CD4-positive, alpha-beta memory T cell (primary cell): ENCODE measurements at regions of chr2 and their contacts with region 1.

Region 1: GRCh38 chr2:12716282-12717190 is at the start of gene TRIB2:
- DNase-seq: peak; percentile 87 to 92 (median 89)
- H3K4me3 ChIP-seq: peak within 1 kb of the TSS; percentile 78 to 96
- H3K4me3 Mint-ChIP-seq: peak within 1 kb of the TSS; percentile 98 to 100 (median 99)
- H3K27ac ChIP-seq: peak within 1 kb of the TSS; percentile 84
- H3K27ac Mint-ChIP-seq: peak within 1 kb of the TSS; percentile 93 to 99 (median 96)
- H3K4me1 ChIP-seq: peaks cover 39% of the 10 kb centered on the region
- H3K4me1 Mint-ChIP-seq: peaks cover 28 to 83% (median 43%) of the 10 kb centered on the region in 4 donors
- H3K27me3 ChIP-seq: no peaks in the 10 kb centered on the region
- H3K27me3 Mint-ChIP-seq: peaks cover 0 to 2% of the 10 kb centered on the region in 2 donors
- total RNA-seq, gene TRIB2: 123 to 126 TPM

Region 2: DNA sequence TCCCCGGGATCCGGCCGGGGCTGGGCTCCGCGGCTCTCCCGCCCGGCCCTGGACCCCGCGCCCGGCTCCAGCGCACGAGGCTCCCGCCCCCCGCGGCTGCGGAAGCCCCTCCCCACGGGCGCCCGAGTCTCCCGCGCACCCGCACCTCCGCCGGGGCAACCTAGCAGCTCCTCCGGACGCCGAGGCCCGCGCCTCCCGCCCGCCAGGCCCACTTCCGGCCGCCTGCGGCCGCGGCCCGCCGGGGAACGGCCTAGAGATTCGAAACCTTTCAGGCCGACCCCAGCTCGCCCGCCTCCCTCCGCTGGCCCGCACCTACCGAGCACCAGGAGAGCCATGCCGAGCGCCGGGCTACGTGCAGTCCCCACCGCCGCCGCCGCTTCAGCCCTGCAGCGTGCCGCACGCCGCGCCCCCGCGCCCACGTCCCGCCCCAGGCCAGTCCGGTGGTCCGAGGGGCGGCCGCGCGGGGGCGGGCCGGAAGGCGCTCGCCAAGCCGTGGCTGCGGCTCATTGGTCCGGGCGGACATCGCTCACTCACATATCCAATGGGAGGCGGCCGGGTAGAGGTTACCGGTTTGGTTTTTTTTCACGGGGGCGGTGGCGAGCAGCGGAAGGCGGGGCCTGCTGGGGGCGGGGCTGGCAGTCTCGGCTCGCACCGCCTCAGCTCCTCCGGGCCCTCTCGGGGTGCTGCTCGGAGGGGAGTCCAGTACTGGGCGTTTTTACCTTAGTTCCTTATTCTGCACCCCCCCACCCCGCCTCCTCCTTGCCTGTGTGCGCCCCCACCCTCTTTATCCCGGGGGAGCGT is 1904.0 kb before region 1 on chr2 and contains the start of gene PDIA6:
- CTCF ChIA-PET with region 1: no interaction called
- POLR2A ChIA-PET with region 1: no interaction called
- intact Hi-C with region 1: loop called (anchors 10 kb)
- DNase-seq: peak; percentile 90 to 95 (median 92)
- H3K4me3 ChIP-seq: peak within 1 kb of the TSS; percentile 72 to 92
- H3K4me3 Mint-ChIP-seq: peak within 1 kb of the TSS; percentile 84 to 95 (median 94)
- H3K27ac ChIP-seq: peak within 1 kb of the TSS; percentile 76
- H3K27ac Mint-ChIP-seq: peak within 1 kb of the TSS; percentile 76 to 95 (median 94)
- H3K4me1 ChIP-seq: peaks cover 47% of the 10 kb centered on the region
- H3K4me1 Mint-ChIP-seq: peaks cover 30 to 43% (median 34%) of the 10 kb centered on the region in 4 donors
- H3K27me3 ChIP-seq: peaks cover under 1% of the 10 kb centered on the region
- H3K27me3 Mint-ChIP-seq: no peaks in the 10 kb centered on the region
- total RNA-seq, gene PDIA6: 75.9 to 84.7 TPM

Region 3: DNA sequence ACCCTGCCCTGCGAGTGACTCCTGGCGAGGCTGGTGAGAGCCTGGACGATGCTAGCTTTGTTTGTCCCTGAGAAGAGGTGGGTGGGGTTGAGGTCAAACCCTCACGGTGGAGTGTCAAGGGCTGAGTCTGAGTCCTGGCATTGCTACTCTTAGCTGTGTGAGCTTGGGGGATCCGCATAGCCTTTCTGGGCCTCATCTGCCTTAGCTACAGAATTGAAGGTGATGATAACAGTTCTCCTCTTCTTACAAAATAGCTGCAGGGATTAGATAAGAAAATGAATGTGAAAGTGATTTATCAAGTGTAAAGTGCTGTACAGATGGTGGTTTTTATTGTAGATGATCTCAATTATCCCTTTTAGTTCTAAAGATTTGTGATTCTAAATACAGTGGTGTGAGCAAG is 825.5 kb before region 1 on chr2:
- CTCF ChIA-PET with region 1: no interaction called
- POLR2A ChIA-PET with region 1: no interaction called
- intact Hi-C with region 1: no loop called
- DNase-seq: no peak
- H3K4me3 ChIP-seq: no peak overlapping the region
- H3K4me3 Mint-ChIP-seq: no peak overlapping the region
- H3K27ac ChIP-seq: no peak overlapping the region
- H3K27ac Mint-ChIP-seq: no peak overlapping the region
- H3K4me1 ChIP-seq: no peaks in the 10 kb centered on the region
- H3K4me1 Mint-ChIP-seq: peaks cover 0 to 1% (median 0%) of the 10 kb centered on the region in 4 donors
- H3K27me3 ChIP-seq: no peaks in the 10 kb centered on the region
- H3K27me3 Mint-ChIP-seq: peaks cover 4 to 5% of the 10 kb centered on the region in 2 donors

Region 4: DNA sequence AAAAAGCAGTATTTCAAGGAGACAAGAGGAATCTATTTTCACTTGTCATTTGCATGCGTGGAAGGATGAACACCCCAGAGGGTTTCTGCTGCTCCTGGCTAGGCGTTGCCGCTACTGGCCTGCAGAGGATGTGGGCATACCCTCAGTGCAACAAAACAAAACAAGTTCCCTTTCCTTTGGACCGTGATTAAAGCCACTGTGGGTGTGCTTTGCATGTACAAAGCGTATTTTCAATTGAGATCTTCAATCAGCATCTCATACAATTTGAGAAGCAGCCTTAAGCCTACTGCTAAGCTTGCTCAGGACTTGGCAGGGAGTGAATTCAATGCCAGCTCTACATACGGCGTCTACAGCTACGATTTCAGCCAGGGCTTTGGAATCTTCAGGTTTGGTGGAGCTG is 671.7 kb before region 1 on chr2:
- CTCF ChIA-PET with region 1: interaction called, 12 read pairs
- POLR2A ChIA-PET with region 1: interaction called, 10 read pairs
- intact Hi-C with region 1: loop called (anchors 5 kb)
- DNase-seq: peak in 4 of 5 donors; percentile 61 to 75 (median 66)
- H3K4me3 ChIP-seq: no peak overlapping the region
- H3K4me3 Mint-ChIP-seq: peak overlapping the region in 7 of 8 donors; percentile 12 to 79 (median 59)
- H3K27ac ChIP-seq: no peak overlapping the region
- H3K27ac Mint-ChIP-seq: peak overlapping the region; percentile 0 to 70 (median 21)
- H3K4me1 ChIP-seq: peaks cover 58% of the 10 kb centered on the region
- H3K4me1 Mint-ChIP-seq: peaks cover 38 to 51% (median 46%) of the 10 kb centered on the region in 4 donors
- H3K27me3 ChIP-seq: no peaks in the 10 kb centered on the region
- H3K27me3 Mint-ChIP-seq: peaks cover 0 to 3% of the 10 kb centered on the region in 2 donors

Region 5: GRCh38 chr2:12424809-12425208 is 291.7 kb before region 1 on chr2:
- CTCF ChIA-PET with region 1: interaction called, 35 read pairs
- POLR2A ChIA-PET with region 1: interaction called, 18 read pairs
- intact Hi-C with region 1: loop called (anchors 5 kb)
- DNase-seq: no peak
- H3K4me3 ChIP-seq: no peak overlapping the region
- H3K4me3 Mint-ChIP-seq: no peak overlapping the region
- H3K27ac ChIP-seq: no peak overlapping the region
- H3K27ac Mint-ChIP-seq: peak overlapping the region in 2 of 7 donors; percentile 9 to 43
- H3K4me1 ChIP-seq: peaks cover 13% of the 10 kb centered on the region
- H3K4me1 Mint-ChIP-seq: peaks cover 13 to 33% (median 20%) of the 10 kb centered on the region in 4 donors
- H3K27me3 ChIP-seq: no peaks in the 10 kb centered on the region
- H3K27me3 Mint-ChIP-seq: no peaks in the 10 kb centered on the region

Region 6: GRCh38 chr2:12486205-12487118 is 230.1 kb before region 1 on chr2:
- CTCF ChIA-PET with region 1: interaction called, 31 read pairs
- POLR2A ChIA-PET with region 1: interaction called, 37 read pairs
- intact Hi-C with region 1: no loop called
- DNase-seq: no peak
- H3K4me3 ChIP-seq: no peak overlapping the region
- H3K4me3 Mint-ChIP-seq: peak overlapping the region in 7 of 8 donors; percentile 13 to 89 (median 81)
- H3K27ac ChIP-seq: no peak overlapping the region
- H3K27ac Mint-ChIP-seq: peak overlapping the region; percentile 79 to 95 (median 92)
- H3K4me1 ChIP-seq: peaks cover 77% of the 10 kb centered on the region
- H3K4me1 Mint-ChIP-seq: peaks cover 57 to 69% (median 67%) of the 10 kb centered on the region in 4 donors
- H3K27me3 ChIP-seq: no peaks in the 10 kb centered on the region
- H3K27me3 Mint-ChIP-seq: no peaks in the 10 kb centered on the region

Region 7: DNA sequence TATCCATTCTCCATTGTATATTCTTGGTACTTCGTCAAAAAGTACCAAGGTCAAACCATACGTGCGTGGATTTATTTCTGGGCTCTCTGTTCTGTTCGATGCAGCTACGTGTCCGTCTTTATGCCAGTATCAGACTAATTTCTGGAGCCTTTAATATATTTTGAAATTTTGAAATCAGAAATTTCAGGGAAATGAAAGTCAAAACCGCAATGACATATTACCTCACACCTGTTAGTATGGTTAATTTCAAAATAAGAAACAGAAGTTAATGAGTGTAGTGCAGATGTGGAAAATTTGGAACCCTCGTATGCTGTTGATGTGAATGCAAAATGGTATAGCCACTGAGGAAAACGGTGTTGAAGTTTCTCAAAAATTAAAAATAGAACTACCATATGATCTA is 155.9 kb before region 1 on chr2:
- CTCF ChIA-PET with region 1: interaction called, 13 read pairs
- POLR2A ChIA-PET with region 1: interaction called, 33 read pairs
- intact Hi-C with region 1: loop called (anchors 2 kb)
- DNase-seq: no peak
- H3K4me3 ChIP-seq: no peak overlapping the region
- H3K4me3 Mint-ChIP-seq: no peak overlapping the region
- H3K27ac ChIP-seq: no peak overlapping the region
- H3K27ac Mint-ChIP-seq: no peak overlapping the region
- H3K4me1 ChIP-seq: peaks cover 17% of the 10 kb centered on the region
- H3K4me1 Mint-ChIP-seq: peaks cover 24 to 39% (median 34%) of the 10 kb centered on the region in 4 donors
- H3K27me3 ChIP-seq: no peaks in the 10 kb centered on the region
- H3K27me3 Mint-ChIP-seq: no peaks in the 10 kb centered on the region

Region 8: GRCh38 chr2:12856934-12857601 is 140.5 kb after region 1 on chr2:
- CTCF ChIA-PET with region 1: interaction called, 6 read pairs
- POLR2A ChIA-PET with region 1: interaction called, 26 read pairs
- intact Hi-C with region 1: loop called (anchors 2 kb)
- DNase-seq: peak; percentile 68 to 83 (median 78)
- H3K4me3 ChIP-seq: peak overlapping the region in 1 of 2 donors; percentile 7
- H3K4me3 Mint-ChIP-seq: peak overlapping the region in 1 of 8 donors; percentile 1
- H3K27ac ChIP-seq: no peak overlapping the region
- H3K27ac Mint-ChIP-seq: peak overlapping the region in 3 of 7 donors; percentile 77 to 82 (median 80)
- H3K4me1 ChIP-seq: peaks cover 71% of the 10 kb centered on the region
- H3K4me1 Mint-ChIP-seq: peaks cover 0 to 21% (median 8%) of the 10 kb centered on the region in 4 donors
- H3K27me3 ChIP-seq: no peaks in the 10 kb centered on the region
- H3K27me3 Mint-ChIP-seq: no peaks in the 10 kb centered on the region